Gastrocnemius medialis (tissue), 4 donors: ENCODE measurements at regions of chr1 and their contacts with region 1.

Region 1: GRCh38 chr1:54488779-54489626 is 59.0 kb upstream of the ACOT11 start:
- DNase-seq: peak; percentile 51 to 62
- ATAC-seq: peak; percentile 67 to 70
- H3K4me3 ChIP-seq: peak overlapping the region; percentile 77 to 89 (median 85)
- H3K27ac ChIP-seq: peak overlapping the region; percentile 92 to 95 (median 94)
- H3K4me1 ChIP-seq: peaks cover 11 to 20% of the 10 kb centered on the region in 2 donors
- H3K27me3 ChIP-seq: no peaks in the 10 kb centered on the region
- CTCF ChIP-seq: peak; percentile 96 to 99 (median 97)
- POLR2A ChIP-seq: no peak

Region 2: GRCh38 chr1:53765657-53766056 is 723.3 kb before region 1 on chr1:
- in situ Hi-C with region 1: no loop called
- intact Hi-C with region 1: no loop called
- DNase-seq: no peak
- ATAC-seq: peak in 1 of 2 donors; percentile 26
- H3K4me3 ChIP-seq: no peak overlapping the region
- H3K27ac ChIP-seq: peak overlapping the region in 2 of 4 donors; percentile 12 to 14
- H3K4me1 ChIP-seq: peaks cover 0 to 5% of the 10 kb centered on the region in 2 donors
- H3K27me3 ChIP-seq: no peaks in the 10 kb centered on the region
- CTCF ChIP-seq: no peak
- POLR2A ChIP-seq: no peak

Region 3: GRCh38 chr1:53889304-53890298 is 599.4 kb before region 1 on chr1 and contains the start of gene YIPF1:
- in situ Hi-C with region 1: no loop called
- intact Hi-C with region 1: loop called (anchors 1 kb)
- DNase-seq: peak; percentile 79 to 88
- ATAC-seq: peak; percentile 97 to 98
- H3K4me3 ChIP-seq: peak within 1 kb of the TSS; percentile 90 to 97 (median 95)
- H3K27ac ChIP-seq: peak within 1 kb of the TSS; percentile 76 to 86 (median 80)
- H3K4me1 ChIP-seq: peaks cover 14 to 15% of the 10 kb centered on the region in 2 donors
- H3K27me3 ChIP-seq: no peaks in the 10 kb centered on the region
- CTCF ChIP-seq: no peak
- POLR2A ChIP-seq: peak; percentile 22 to 55
- total RNA-seq, gene YIPF1: 18.8 to 34.8 (median 27.2) TPM

Region 4: GRCh38 chr1:54070171-54070837 is 418.7 kb before region 1 on chr1:
- in situ Hi-C with region 1: loop called in 1 of 4 experiments (anchors 10 kb)
- intact Hi-C with region 1: loop called (anchors 1 kb)
- DNase-seq: no peak
- ATAC-seq: peak; percentile 83 to 84
- H3K4me3 ChIP-seq: no peak overlapping the region
- H3K27ac ChIP-seq: no peak overlapping the region
- H3K4me1 ChIP-seq: no peaks in the 10 kb centered on the region
- H3K27me3 ChIP-seq: no peaks in the 10 kb centered on the region
- CTCF ChIP-seq: peak; percentile 40 to 72 (median 66)
- POLR2A ChIP-seq: no peak

Region 5: GRCh38 chr1:54199765-54200518 is 289.1 kb before region 1 on chr1 and contains the starts of genes CYB5RL and MRPL37:
- in situ Hi-C with region 1: loop called in 1 of 4 experiments (anchors 25 kb)
- intact Hi-C with region 1: loop called (anchors 2 kb)
- DNase-seq: peak; percentile 94 to 95
- ATAC-seq: peak; percentile 99
- H3K4me3 ChIP-seq: peak within 1 kb of the TSS; percentile 94 to 100 (median 97)
- H3K27ac ChIP-seq: peak within 1 kb of the TSS; percentile 93 to 97 (median 96)
- H3K4me1 ChIP-seq: peaks cover 18 to 22% of the 10 kb centered on the region in 2 donors
- H3K27me3 ChIP-seq: no peaks in the 10 kb centered on the region
- CTCF ChIP-seq: no peak
- POLR2A ChIP-seq: peak; percentile 65 to 78
- total RNA-seq, gene CYB5RL: 1.8 to 5.8 (median 3.4) TPM
- total RNA-seq, gene MRPL37: 91.6 to 141 (median 121) TPM

Region 6: DNA sequence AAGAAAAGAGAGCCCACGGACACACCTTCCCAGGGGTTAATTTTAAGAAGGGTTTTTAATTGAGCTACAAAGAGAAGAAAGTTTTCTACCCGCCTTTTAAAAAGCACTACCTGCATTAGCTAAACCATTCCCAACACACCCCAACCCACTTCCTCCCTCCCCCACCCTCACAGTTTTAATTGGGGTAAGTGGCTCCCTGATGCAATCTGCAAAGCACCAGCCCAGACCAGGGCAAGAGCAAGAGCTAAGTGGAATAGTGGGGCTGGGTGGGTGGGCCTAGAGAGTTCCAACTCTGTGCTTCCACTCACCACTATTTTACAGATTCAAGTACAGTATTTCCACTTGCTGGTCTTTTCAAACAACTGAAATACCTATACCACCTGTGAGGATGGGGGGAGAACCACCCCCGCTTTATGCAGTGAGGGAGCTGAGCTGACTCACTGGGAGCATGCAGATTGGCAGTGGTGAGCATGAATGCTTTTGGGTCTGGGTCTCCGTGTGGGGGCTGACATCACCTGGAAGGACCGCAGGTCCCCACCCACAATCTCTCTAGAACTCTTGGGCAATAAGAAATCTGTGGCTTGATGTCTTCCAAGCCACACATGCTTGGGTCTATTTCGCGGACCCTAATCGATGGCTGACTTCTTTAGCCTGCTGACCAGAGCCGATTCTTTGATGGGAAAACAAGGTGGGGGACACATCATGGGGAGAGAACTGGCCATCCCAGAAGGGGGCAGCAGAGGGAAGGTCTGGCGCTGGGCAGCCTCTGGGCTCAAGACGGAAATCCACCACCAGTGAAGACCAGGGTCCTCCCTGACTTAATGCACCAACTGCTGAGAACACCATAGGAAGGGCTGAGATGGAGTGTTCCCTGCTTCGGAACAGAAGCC is 178.3 kb before region 1 on chr1:
- in situ Hi-C with region 1: no loop called
- intact Hi-C with region 1: loop called (anchors 1 kb)
- DNase-seq: peak in 1 of 2 donors; percentile 40
- ATAC-seq: peak in 1 of 2 donors; percentile 30
- H3K4me3 ChIP-seq: no peak overlapping the region
- H3K27ac ChIP-seq: peak overlapping the region; percentile 64 to 72 (median 66)
- H3K4me1 ChIP-seq: peaks cover 57 to 60% of the 10 kb centered on the region in 2 donors
- H3K27me3 ChIP-seq: no peaks in the 10 kb centered on the region
- CTCF ChIP-seq: peak; percentile 46 to 66 (median 63)
- POLR2A ChIP-seq: no peak

Region 7: DNA sequence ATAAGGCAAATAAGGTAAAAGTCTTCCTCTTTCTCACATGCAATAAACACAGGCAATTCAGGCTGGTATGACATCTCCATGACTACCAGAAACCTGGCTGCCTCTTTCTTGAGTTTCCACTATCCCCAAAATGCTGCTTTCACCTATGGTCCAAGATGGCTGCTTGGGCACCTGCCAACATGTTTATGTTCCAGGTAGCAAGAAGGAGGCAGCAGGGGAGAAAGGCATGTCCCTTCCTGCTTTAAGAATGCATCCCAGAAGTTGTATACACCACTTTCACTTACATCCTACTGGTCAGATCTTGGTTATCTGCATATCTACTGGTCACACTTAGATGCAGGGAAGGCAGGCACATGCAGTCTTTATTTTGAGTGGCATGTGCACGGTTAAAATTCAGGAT is 39.6 kb after region 1 on chr1:
- in situ Hi-C with region 1: no loop called
- intact Hi-C with region 1: no loop called
- DNase-seq: no peak
- ATAC-seq: no peak
- H3K4me3 ChIP-seq: no peak overlapping the region
- H3K27ac ChIP-seq: no peak overlapping the region
- H3K4me1 ChIP-seq: no peaks in the 10 kb centered on the region
- H3K27me3 ChIP-seq: no peaks in the 10 kb centered on the region
- CTCF ChIP-seq: no peak
- POLR2A ChIP-seq: no peak